Gastrocnemius medialis (tissue), 4 donors: ENCODE measurements at regions of chr4 and their contacts with region 1.

Region 1: GRCh38 chr4:142883040-142883832 is 37.1 kb upstream of the INPP4B start:
- DNase-seq: no peak
- ATAC-seq: peak in 1 of 2 donors; percentile 51
- H3K4me3 ChIP-seq: no peak overlapping the region
- H3K27ac ChIP-seq: no peak overlapping the region
- H3K4me1 ChIP-seq: no peaks in the 10 kb centered on the region
- H3K27me3 ChIP-seq: no peaks in the 10 kb centered on the region
- CTCF ChIP-seq: peak in 3 of 5 experiments; percentile 16 to 42 (median 42)
- POLR2A ChIP-seq: no peak

Region 2: GRCh38 chr4:142645475-142646108 is 237.6 kb before region 1 on chr4:
- in situ Hi-C with region 1: no loop called
- intact Hi-C with region 1: no loop called
- DNase-seq: no peak
- ATAC-seq: no peak
- H3K4me3 ChIP-seq: no peak overlapping the region
- H3K27ac ChIP-seq: no peak overlapping the region
- H3K4me1 ChIP-seq: no peaks in the 10 kb centered on the region
- H3K27me3 ChIP-seq: no peaks in the 10 kb centered on the region
- CTCF ChIP-seq: no peak
- POLR2A ChIP-seq: no peak

Region 3: GRCh38 chr4:143025081-143025704 is 142.0 kb after region 1 on chr4:
- in situ Hi-C with region 1: no loop called
- intact Hi-C with region 1: loop called (anchors 5 kb)
- DNase-seq: no peak
- ATAC-seq: peak in 1 of 2 donors; percentile 44
- H3K4me3 ChIP-seq: no peak overlapping the region
- H3K27ac ChIP-seq: no peak overlapping the region
- H3K4me1 ChIP-seq: no peaks in the 10 kb centered on the region
- H3K27me3 ChIP-seq: no peaks in the 10 kb centered on the region
- CTCF ChIP-seq: peak in 2 of 5 experiments; percentile 21 to 28
- POLR2A ChIP-seq: no peak